ENCODE measurements at regions of chr4 and their contacts with region 1.

Region 1: DNA sequence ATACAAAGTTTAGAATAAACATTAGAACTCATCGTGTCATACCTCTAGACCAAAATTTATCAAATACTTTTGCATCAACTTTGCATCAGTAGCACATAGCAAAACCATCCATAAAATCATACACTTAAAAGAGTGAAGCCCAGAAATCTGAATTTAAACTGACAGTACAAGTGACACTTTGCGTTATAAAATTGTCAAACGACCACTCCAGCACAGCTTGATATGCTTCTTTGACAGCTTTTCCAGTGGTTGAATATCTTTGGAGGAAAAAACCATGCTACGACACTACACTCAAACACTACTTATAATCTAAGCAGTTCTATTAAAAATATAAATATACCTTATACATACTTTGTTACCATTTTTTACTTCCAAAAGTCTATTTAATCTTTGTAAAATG is 1644.4 kb downstream of the STIM2 start:
- DNase-seq: no peak
- H3K4me3 ChIP-seq: no peak overlapping the region
- H3K27ac ChIP-seq: no peak overlapping the region
- H3K4me1 ChIP-seq: no peaks in the 10 kb centered on the region
- H3K27me3 ChIP-seq: no peaks in the 10 kb centered on the region
- CTCF ChIP-seq: no peak

Region 2: GRCh38 chr4:27318743-27319142 is 1186.3 kb before region 1 on chr4:
- intact Hi-C with region 1: no loop called
- DNase-seq: no peak
- H3K4me3 ChIP-seq: no peak overlapping the region
- H3K27ac ChIP-seq: no peak overlapping the region
- H3K4me1 ChIP-seq: no peaks in the 10 kb centered on the region
- H3K27me3 ChIP-seq: no peaks in the 10 kb centered on the region
- CTCF ChIP-seq: no peak

Region 3: GRCh38 chr4:28555866-28556265 is 50.8 kb after region 1 on chr4:
- intact Hi-C with region 1: loop called (anchors 2 kb)
- DNase-seq: no peak
- H3K4me3 ChIP-seq: no peak overlapping the region
- H3K27ac ChIP-seq: no peak overlapping the region
- H3K4me1 ChIP-seq: no peaks in the 10 kb centered on the region
- H3K27me3 ChIP-seq: no peaks in the 10 kb centered on the region
- CTCF ChIP-seq: no peak

Measured in tibial artery (tissue), 4 donors.